ENCODE measurements at regions of chr7 and their contacts with region 1.

Region 1: GRCh38 chr7:155824227-155824886 is 12.1 kb upstream of the SHH start:
- DNase-seq: no peak
- ATAC-seq: peak in 2 of 4 donors; percentile 43 to 56
- H3K4me3 ChIP-seq: no peak overlapping the region
- H3K27ac ChIP-seq: no peak overlapping the region
- H3K4me1 ChIP-seq: no peaks in the 10 kb centered on the region
- H3K27me3 ChIP-seq: no peaks in the 10 kb centered on the region
- CTCF ChIP-seq: no peak

Region 2: GRCh38 chr7:154868921-154869320 is 955.4 kb before region 1 on chr7:
- intact Hi-C with region 1: no loop called
- DNase-seq: peak in 1 of 6 donors; percentile 30
- ATAC-seq: no peak
- H3K4me3 ChIP-seq: no peak overlapping the region
- H3K27ac ChIP-seq: no peak overlapping the region
- H3K4me1 ChIP-seq: no peaks in the 10 kb centered on the region
- H3K27me3 ChIP-seq: no peaks in the 10 kb centered on the region
- CTCF ChIP-seq: no peak

Region 3: DNA sequence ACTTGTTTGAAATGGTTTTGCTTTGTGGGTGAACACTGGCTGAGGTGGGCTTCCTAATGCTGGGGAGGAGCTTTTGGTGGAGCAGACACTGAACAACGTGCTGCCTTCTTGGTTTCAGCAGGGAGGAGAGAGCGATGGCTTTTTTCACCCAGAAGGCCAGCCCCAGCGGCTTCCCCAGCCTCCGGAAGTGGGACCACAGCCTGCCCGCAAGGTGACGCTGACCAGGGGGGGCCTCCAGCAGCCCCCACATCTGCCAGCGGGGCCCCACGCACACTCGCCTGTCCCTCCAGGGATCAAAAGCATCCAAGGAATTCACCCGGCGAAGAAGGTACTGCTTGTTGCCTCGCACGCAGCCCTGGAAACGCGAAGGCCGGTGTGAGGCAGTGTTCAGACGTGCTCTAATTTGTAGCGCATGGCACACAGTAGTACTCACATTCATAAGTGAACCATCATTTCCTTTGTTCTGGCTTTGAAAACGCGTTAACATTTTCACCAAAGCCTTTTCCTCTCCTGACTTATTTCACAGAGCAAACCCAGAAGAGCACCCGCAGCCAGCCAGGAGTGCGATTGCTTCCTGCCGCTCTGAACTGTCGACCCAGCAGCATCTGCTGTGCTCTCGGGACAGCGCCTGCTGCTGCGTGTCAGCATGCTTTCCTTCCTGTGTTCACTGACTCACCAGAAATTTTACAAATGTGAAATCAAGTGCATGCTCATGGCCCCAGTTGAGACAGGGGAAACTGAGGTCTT is 60.5 kb before region 1 on chr7:
- intact Hi-C with region 1: no loop called
- DNase-seq: no peak
- ATAC-seq: peak in 3 of 4 donors; percentile 36 to 63 (median 39)
- H3K4me3 ChIP-seq: no peak overlapping the region
- H3K27ac ChIP-seq: peak overlapping the region in 1 of 4 donors; percentile 13
- H3K4me1 ChIP-seq: peaks cover 0 to 3% (median 0%) of the 10 kb centered on the region in 3 donors
- H3K27me3 ChIP-seq: no peaks in the 10 kb centered on the region
- CTCF ChIP-seq: no peak

Region 4: GRCh38 chr7:155796381-155797261 is 27.7 kb before region 1 on chr7:
- intact Hi-C with region 1: no loop called
- DNase-seq: peak in 5 of 6 donors; percentile 35 to 94 (median 77)
- ATAC-seq: peak; percentile 89 to 99 (median 94)
- H3K4me3 ChIP-seq: peak overlapping the region in 1 of 4 donors; percentile 17
- H3K27ac ChIP-seq: no peak overlapping the region
- H3K4me1 ChIP-seq: peaks cover 0 to 3% (median 3%) of the 10 kb centered on the region in 3 donors
- H3K27me3 ChIP-seq: peaks cover 0 to 10% (median 0%) of the 10 kb centered on the region in 4 donors
- CTCF ChIP-seq: peak; percentile 87 to 93 (median 91)

Region 5: DNA sequence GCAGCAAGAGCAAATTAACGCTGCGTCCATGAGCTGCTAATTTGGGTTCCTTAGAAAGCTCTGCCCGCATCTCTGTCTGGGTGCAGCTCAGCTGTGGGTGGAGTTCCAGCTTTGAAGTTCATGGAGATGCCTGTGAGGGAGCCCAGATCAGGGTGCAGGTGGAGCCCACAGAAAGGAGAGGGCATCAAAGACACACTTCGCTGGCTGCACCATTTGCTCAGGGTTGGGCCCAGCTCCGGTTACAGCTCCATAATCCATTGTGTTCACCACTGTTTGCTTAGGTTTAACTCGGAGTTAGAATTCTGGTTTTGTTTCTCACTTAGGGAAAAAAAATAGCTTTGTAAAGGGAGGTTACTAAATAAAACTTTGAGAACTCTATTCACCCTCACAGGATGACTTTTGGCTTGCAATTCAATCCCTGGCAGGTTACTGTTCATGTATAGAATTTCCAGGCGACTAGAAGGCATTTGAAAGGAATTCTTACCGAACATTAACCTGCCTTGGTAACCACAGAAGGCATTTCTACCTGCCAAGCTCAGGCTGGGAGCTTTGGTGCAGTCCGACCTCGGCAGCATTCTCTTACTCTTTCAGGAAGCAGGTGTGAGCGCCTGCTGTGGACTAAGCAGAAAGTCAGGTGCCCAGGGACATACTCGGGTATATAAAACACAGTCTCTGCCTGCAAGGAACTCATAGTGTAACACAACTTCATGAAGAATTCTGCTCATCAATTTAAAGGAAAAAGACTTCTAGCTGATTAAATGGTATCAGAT is 636.7 kb after region 1 on chr7:
- intact Hi-C with region 1: loop called in 1 of 3 experiments (anchors 10 kb)
- DNase-seq: no peak
- ATAC-seq: no peak
- H3K4me3 ChIP-seq: no peak overlapping the region
- H3K27ac ChIP-seq: no peak overlapping the region
- H3K4me1 ChIP-seq: no peaks in the 10 kb centered on the region
- H3K27me3 ChIP-seq: no peaks in the 10 kb centered on the region
- CTCF ChIP-seq: no peak

Measured in pancreas (tissue), 10 donors.